ENCODE measurements at regions of chr3 and their contacts with region 1.

Region 1: DNA sequence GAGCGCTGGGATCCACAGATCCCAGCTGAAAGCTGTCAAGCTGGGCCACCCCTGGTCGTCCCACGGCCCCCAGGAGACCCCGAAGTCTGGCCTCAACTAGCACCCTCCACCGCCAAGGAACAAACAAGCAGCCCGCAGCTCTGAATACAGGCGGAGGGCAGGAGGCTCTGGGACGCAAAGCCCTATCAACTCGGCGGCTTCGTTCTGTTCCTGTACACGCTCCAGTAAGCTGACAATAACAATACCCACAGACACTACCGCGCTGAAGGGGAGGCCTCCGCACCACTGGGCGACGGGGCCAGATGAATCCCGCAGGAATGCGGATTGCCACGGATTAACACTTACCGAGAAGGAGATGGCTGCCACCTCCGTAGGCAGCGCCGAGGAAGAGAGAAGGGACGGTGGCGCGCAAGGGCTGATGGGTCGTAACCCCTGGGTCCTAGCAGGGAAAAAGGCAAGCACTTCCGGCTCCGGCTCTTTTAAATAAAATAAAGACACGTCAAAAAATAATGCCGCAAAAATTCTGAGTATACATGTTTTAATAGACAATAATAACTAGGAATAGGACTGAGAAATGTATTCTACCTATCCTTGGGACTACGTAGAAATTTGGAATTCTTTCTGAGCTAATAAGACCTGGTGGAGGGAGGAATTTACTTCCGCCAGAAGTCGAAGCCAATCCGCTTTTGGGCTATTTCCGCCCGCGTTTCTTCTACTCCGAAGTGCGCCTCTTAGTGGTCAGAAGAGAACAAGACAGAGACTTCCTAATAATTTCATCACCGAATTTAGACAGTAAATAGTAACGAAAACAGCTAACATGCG is at the start of gene RPL32:
- DNase-seq: peak; percentile 84 to 90
- H3K4me3 ChIP-seq: peak within 1 kb of the TSS; percentile 72 to 89
- H3K27ac ChIP-seq: peak within 1 kb of the TSS; percentile 79 to 84
- H3K4me1 ChIP-seq: peaks cover 0 to 42% (median 30%) of the 10 kb centered on the region in 4 donors
- H3K27me3 ChIP-seq: no peaks in the 10 kb centered on the region
- CTCF ChIP-seq: peak; percentile 82 to 84

Region 2: DNA sequence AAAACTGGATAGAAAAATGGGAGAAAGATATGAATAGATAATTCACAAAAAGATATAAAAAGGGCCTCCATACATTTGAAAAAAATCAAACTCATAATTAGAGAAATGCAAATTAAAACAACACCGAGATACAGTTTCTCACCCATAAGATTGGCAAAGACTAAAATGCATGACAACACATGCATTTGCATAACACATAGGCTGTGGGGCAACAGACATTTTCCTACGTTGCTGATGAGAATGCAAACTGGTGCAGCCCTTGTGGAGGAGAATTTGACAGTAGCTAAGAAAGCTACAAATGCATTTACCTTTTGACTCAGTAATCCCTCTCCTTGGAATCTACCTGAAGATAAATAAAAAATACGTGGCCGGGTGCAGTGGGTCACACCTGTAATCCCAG is 56.3 kb before region 1 on chr3:
- intact Hi-C with region 1: loop called (anchors 5 kb)
- DNase-seq: no peak
- H3K4me3 ChIP-seq: no peak overlapping the region
- H3K27ac ChIP-seq: no peak overlapping the region
- H3K4me1 ChIP-seq: peaks cover 0 to 4% (median 0%) of the 10 kb centered on the region in 4 donors
- H3K27me3 ChIP-seq: peaks cover 0 to 2% of the 10 kb centered on the region in 2 donors
- CTCF ChIP-seq: no peak

Region 3: GRCh38 chr3:12810013-12810780 is 31.2 kb before region 1 on chr3:
- intact Hi-C with region 1: loop called (anchors 2 kb)
- DNase-seq: peak; percentile 98
- H3K4me3 ChIP-seq: peak overlapping the region; percentile 54 to 56
- H3K27ac ChIP-seq: peak overlapping the region; percentile 46 to 84
- H3K4me1 ChIP-seq: peaks cover 0 to 41% (median 20%) of the 10 kb centered on the region in 4 donors
- H3K27me3 ChIP-seq: no peaks in the 10 kb centered on the region
- CTCF ChIP-seq: peak; percentile 87 to 96

Measured in tibial artery (tissue), 4 donors.